ENCODE measurements at regions of chr14 and their contacts with region 1.

Region 1: GRCh38 chr14:21455911-21456667 is at the start of gene CHD8:
- DNase-seq: peak; percentile 100
- ATAC-seq: peak; percentile 100
- total RNA-seq, gene CHD8: 27.0 TPM

Region 2: GRCh38 chr14:21437063-21437901 is 18.8 kb before region 1 on chr14:
- intact Hi-C with region 1: loop called (anchors 1 kb)
- DNase-seq: peak; percentile 99
- ATAC-seq: peak; percentile 100

Region 3: GRCh38 chr14:21476925-21477681 is 21.0 kb after region 1 on chr14 and contains the starts of genes RAB2B and TOX4:
- intact Hi-C with region 1: loop called (anchors 1 kb)
- DNase-seq: peak; percentile 96
- ATAC-seq: peak; percentile 100
- total RNA-seq, gene RAB2B: 15.1 TPM
- total RNA-seq, gene TOX4: 86.5 TPM

Region 4: GRCh38 chr14:21557084-21557901 is 101.2 kb after region 1 on chr14:
- intact Hi-C with region 1: loop called (anchors 1 kb)
- DNase-seq: peak; percentile 73
- ATAC-seq: peak; percentile 84

Measured in Right ventricle myocardium inferior (tissue), 1 donor.